ENCODE measurements at regions of chr17 and their contacts with region 1.

Region 1: DNA sequence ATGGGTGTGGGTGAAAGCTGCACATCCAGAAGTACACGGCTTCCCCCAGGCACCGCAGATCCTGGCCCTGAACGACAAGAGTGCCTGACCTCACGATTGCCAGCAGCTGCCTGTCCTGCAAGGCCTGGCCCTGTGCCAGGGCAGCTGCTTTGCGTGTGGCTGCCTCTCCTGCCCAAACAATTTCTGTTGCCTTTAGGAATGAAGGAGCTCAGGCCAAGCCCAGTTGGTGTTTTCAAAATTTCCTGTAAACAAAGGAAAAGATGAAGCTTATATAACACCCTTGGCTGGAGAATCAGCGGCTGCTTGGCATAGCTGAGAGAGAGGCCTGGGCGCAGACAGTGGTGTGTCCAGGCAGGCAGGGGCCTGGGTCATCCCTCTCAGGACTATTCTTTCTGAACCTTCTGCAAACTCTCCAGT is 11.7 kb upstream of the SLC47A2 start:
- DNase-seq: peak; percentile 89
- H3K4me3 ChIP-seq: no peak overlapping the region
- H3K27ac ChIP-seq: peak overlapping the region; percentile 95 to 96
- H3K4me1 ChIP-seq: peaks cover 47% of the 10 kb centered on the region
- H3K27me3 ChIP-seq: no peaks in the 10 kb centered on the region
- CTCF ChIP-seq: no peak
- POLR2A ChIP-seq: no peak

Region 2: DNA sequence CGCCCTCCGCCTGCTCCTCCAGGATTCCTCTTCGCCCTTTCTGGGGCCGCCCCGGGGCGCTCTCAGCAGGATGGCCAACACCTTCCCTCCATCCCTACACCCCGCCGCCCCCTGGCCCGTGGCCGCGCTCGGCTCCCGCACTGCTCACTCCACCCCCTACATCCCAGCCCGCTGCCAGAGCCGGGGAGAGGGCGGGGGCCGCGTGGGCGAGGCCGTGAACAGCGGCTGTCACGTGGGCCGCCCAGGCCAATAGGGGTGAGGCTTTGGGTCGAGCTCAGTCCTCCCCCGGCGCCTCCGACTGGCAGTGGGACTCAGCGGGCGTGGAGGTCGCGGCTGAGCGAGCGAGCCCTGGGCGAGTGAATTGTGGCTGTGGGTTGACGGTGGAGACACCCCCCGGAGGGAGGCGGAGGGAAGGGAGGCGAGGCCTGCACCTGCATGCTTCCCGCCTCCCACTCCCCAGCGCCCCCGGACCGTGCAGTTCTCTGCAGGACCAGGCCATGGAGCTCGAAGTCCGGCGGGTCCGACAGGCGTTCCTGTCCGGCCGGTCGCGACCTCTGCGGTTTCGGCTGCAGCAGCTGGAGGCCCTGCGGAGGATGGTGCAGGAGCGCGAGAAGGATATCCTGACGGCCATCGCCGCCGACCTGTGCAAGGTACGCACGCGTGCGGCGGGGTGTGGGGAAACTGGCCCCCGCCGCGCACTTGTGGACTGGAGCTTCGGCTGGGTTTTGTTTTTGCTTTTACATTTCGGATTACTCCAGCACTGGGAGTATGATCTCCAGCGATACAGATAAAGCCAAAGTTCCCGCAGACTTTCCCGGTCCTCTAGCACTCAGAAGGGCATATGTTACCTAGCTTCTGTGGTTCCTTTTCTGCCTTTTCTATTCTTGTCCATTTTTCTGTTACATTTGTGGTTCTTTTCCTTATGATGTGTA is 79.3 kb before region 1 on chr17 and contains the start of gene ALDH3A2:
- intact Hi-C with region 1: loop called (anchors 5 kb)
- DNase-seq: peak; percentile 99
- H3K4me3 ChIP-seq: peak within 1 kb of the TSS; percentile 63 to 89
- H3K27ac ChIP-seq: peak within 1 kb of the TSS; percentile 97
- H3K4me1 ChIP-seq: peaks cover 36% of the 10 kb centered on the region
- H3K27me3 ChIP-seq: no peaks in the 10 kb centered on the region
- CTCF ChIP-seq: peak in 1 of 3 experiments; percentile 1
- POLR2A ChIP-seq: peak; percentile 42
- total RNA-seq, gene ALDH3A2: 100.0 to 125 TPM

Measured in testis (tissue), 5 donors.